ENCODE measurements at regions of chr1 and their contacts with region 1.

Region 1: DNA sequence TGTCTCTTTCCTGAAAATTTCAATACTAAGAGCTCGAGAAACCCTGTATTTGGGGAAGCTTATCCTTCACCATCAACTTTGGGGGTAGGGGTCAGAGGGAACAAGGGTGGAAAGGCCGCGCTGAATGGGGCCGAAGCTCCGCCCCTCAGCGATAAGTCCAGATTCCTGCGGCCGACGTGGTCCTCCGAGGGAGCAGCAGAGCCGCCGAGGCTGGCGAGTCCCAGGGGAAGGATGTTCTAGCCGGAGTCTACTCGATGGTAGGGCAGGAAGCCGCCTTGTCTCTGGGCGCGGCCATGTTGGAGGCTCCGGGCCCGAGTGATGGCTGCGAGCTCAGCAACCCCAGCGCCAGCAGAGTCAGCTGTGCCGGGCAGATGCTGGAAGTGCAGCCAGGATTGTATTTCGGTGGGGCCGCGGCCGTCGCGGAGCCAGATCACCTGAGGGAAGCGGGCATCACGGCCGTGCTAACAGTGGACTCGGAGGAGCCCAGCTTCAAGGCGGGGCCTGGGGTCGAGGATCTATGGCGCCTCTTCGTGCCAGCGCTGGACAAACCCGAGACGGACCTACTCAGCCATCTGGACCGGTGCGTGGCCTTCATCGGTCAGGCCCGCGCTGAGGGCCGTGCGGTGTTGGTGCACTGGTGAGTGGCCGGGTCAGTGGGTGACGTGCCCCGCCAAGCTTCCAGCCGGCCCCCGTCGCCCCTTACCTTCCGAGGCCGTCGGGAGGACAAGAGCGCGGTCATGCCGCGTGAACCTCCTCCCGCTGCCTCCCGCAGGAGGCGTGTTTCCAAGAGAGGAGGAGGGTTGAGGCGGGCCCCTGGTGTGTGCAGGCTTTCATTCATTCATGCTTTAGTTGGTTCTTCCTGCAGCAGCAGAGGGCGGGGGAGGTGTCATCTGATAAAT is at the start of gene DUSP12:
- DNase-seq: peak; percentile 96
- H3K4me3 ChIP-seq: peak within 1 kb of the TSS; percentile 87
- CTCF ChIP-seq: peak; percentile 26

Region 2: GRCh38 chr1:161374373-161374772 is 375.4 kb before region 1 on chr1:
- in situ Hi-C with region 1: no loop called
- DNase-seq: no peak
- H3K4me3 ChIP-seq: no peak overlapping the region
- CTCF ChIP-seq: peak; percentile 38

Region 3: GRCh38 chr1:161631076-161631475 is 118.7 kb before region 1 on chr1 and contains the start of gene FCGR3B:
- in situ Hi-C with region 1: loop called (anchors 25 kb)
- DNase-seq: no peak
- H3K4me3 ChIP-seq: no peak within 1 kb of the TSS
- CTCF ChIP-seq: no peak

Region 4: DNA sequence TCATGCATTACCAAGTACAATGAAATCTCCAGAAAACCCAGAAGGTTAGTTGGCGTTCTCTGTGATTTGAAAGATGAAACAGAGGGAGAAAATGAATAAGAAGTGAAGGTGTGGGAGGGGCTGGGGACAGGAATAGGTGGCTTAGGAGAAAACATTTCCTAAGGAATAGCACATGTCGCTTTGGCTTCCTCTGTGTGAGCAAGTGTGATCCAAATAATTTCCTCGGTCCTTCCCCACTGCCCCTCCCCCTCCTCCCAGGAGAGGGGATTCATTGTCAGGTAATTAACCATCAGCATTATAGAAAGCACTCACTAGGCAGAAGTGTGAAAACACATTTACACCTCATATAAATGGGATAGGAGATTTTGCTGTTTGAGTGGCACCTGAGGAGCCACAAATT is 1677.5 kb after region 1 on chr1:
- in situ Hi-C with region 1: no loop called
- DNase-seq: no peak
- H3K4me3 ChIP-seq: no peak overlapping the region
- CTCF ChIP-seq: no peak